Activated B cell treated with CpG ODN at 0.5 μM for 24 hours (primary cell): ENCODE measurements at regions of chr1 and their contacts with region 1.

Region 1: GRCh38 chr1:70221241-70222121 is at the start of gene SRSF11:
- DNase-seq: peak; percentile 97
- ATAC-seq: peak; percentile 95
- H3K4me3 Mint-ChIP-seq: peak within 1 kb of the TSS; percentile 91
- H3K27ac Mint-ChIP-seq: peak within 1 kb of the TSS; percentile 93
- H3K4me1 Mint-ChIP-seq: peaks cover 44% of the 10 kb centered on the region
- H3K27me3 Mint-ChIP-seq: no peaks in the 10 kb centered on the region
- CTCF ChIP-seq: no peak
- total RNA-seq, gene SRSF11: 182 and 231 TPM in 2 replicates

Region 2: GRCh38 chr1:70205434-70206118 is 15.9 kb before region 1 on chr1 and contains the start of gene LRRC40:
- CTCF ChIA-PET with region 1: interaction called, 3 read pairs
- POLR2A ChIA-PET with region 1: interaction called, 53 read pairs
- intact Hi-C with region 1: loop called (anchors 1 kb)
- DNase-seq: peak; percentile 98
- ATAC-seq: peak; percentile 96
- H3K4me3 Mint-ChIP-seq: peak within 1 kb of the TSS; percentile 99
- H3K27ac Mint-ChIP-seq: peak within 1 kb of the TSS; percentile 97
- H3K4me1 Mint-ChIP-seq: peaks cover 73% of the 10 kb centered on the region
- H3K27me3 Mint-ChIP-seq: no peaks in the 10 kb centered on the region
- CTCF ChIP-seq: no peak
- total RNA-seq, gene LRRC40: 15.8 and 16.7 TPM in 2 replicates

Region 3: DNA sequence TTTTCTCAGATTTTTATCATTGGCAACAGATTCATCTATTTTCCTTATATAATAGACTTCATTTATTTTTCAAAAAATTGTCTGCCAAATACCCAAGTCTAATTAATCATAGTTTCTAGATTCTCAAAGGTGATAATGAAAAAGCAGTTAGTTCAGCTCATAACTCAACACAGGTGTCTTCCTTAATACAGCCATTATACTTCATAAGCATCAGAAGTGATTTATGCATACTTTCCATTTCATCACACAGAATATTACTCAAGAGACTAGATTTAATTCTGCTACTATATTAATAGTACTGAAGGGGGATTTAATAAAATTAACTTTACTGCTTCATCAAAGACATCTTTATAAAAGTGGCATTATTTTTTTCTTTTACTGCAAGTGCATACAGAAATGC is 18.5 kb after region 1 on chr1:
- CTCF ChIA-PET with region 1: no interaction called
- POLR2A ChIA-PET with region 1: no interaction called
- intact Hi-C with region 1: loop called (anchors 2 kb)
- DNase-seq: no peak
- ATAC-seq: no peak
- H3K4me3 Mint-ChIP-seq: no peak overlapping the region
- H3K27ac Mint-ChIP-seq: no peak overlapping the region
- H3K4me1 Mint-ChIP-seq: no peaks in the 10 kb centered on the region
- H3K27me3 Mint-ChIP-seq: no peaks in the 10 kb centered on the region
- CTCF ChIP-seq: no peak

Region 4: DNA sequence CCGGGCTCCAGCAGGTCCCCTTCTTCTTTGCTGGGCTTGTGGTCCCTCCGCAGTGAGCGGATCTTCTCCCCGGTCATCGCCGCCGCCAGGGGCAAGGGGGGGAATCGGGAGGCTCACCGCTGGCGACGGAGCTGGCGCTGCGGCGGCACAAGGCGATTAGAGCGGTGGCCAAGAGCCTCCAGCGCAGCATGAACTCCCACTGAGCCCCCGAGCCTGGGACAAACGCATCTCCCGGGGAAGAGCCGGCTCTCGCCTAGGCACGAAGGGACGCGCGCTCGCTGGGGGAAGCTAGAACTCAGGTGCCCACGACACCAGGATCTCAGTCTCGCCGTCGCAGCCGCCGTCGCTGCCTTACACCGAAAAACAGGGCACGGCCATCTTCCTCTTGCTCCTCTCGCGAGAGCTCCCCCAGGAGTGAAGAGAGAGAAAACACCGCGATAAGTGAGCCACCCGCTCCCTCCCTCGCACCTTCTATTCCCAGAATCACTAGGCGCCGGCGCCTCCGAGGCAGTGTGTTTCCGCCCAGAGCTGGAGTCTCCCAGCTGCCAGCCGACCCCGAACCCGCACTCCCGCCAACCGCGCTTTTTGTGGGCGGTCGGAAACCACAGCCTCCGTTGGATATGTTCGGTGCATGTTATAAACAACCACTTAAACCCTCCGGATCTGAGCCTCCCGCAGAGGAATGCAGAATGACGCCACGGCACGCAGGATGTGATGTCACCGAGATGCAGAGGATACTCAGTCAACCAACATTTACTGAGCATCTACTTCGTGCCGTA is 133.0 kb after region 1 on chr1 and contains the start of gene ANKRD13C:
- CTCF ChIA-PET with region 1: no interaction called
- POLR2A ChIA-PET with region 1: interaction called, 8 read pairs
- intact Hi-C with region 1: loop called (anchors 1 kb)
- DNase-seq: peak; percentile 74
- ATAC-seq: peak; percentile 93
- H3K4me3 Mint-ChIP-seq: peak within 1 kb of the TSS; percentile 99
- H3K27ac Mint-ChIP-seq: peak within 1 kb of the TSS; percentile 98
- H3K4me1 Mint-ChIP-seq: peaks cover 44% of the 10 kb centered on the region
- H3K27me3 Mint-ChIP-seq: no peaks in the 10 kb centered on the region
- CTCF ChIP-seq: no peak
- total RNA-seq, gene ANKRD13C: 20.9 and 21.2 TPM in 2 replicates

Region 5: GRCh38 chr1:70410604-70411359 is 189.3 kb after region 1 on chr1 and contains the start of gene CTH:
- CTCF ChIA-PET with region 1: no interaction called
- POLR2A ChIA-PET with region 1: interaction called, 17 read pairs
- intact Hi-C with region 1: loop called (anchors 1 kb)
- DNase-seq: peak; percentile 90
- ATAC-seq: peak; percentile 97
- H3K4me3 Mint-ChIP-seq: peak within 1 kb of the TSS; percentile 95
- H3K27ac Mint-ChIP-seq: peak within 1 kb of the TSS; percentile 98
- H3K4me1 Mint-ChIP-seq: peaks cover 26% of the 10 kb centered on the region
- H3K27me3 Mint-ChIP-seq: peaks cover 11% of the 10 kb centered on the region
- CTCF ChIP-seq: no peak
- total RNA-seq, gene CTH: 4.3 TPM in 2 replicates

Region 6: GRCh38 chr1:70442490-70442889 is 221.0 kb after region 1 on chr1:
- CTCF ChIA-PET with region 1: no interaction called
- POLR2A ChIA-PET with region 1: no interaction called
- intact Hi-C with region 1: no loop called
- DNase-seq: no peak
- ATAC-seq: no peak
- H3K4me3 Mint-ChIP-seq: no peak overlapping the region
- H3K27ac Mint-ChIP-seq: no peak overlapping the region
- H3K4me1 Mint-ChIP-seq: no peaks in the 10 kb centered on the region
- H3K27me3 Mint-ChIP-seq: no peaks in the 10 kb centered on the region
- CTCF ChIP-seq: no peak

Region 7: GRCh38 chr1:70536708-70537366 is 315.4 kb after region 1 on chr1:
- CTCF ChIA-PET with region 1: no interaction called
- POLR2A ChIA-PET with region 1: no interaction called
- intact Hi-C with region 1: no loop called
- DNase-seq: no peak
- ATAC-seq: no peak
- H3K4me3 Mint-ChIP-seq: no peak overlapping the region
- H3K27ac Mint-ChIP-seq: no peak overlapping the region
- H3K4me1 Mint-ChIP-seq: no peaks in the 10 kb centered on the region
- H3K27me3 Mint-ChIP-seq: peaks cover 8% of the 10 kb centered on the region
- CTCF ChIP-seq: no peak